ENCODE measurements at regions of chr2 and their contacts with region 1.

Region 1: GRCh38 chr2:7437716-7438632 is 520.8 kb downstream of the RNF144A start:
- DNase-seq: peak; percentile 77
- ATAC-seq: peak; percentile 44
- H3K4me3 Mint-ChIP-seq: peak overlapping the region; percentile 15
- H3K27ac Mint-ChIP-seq: peak overlapping the region; percentile 93
- H3K4me1 Mint-ChIP-seq: peaks cover 88% of the 10 kb centered on the region
- H3K27me3 Mint-ChIP-seq: no peaks in the 10 kb centered on the region
- CTCF ChIP-seq: no peak

Region 2: DNA sequence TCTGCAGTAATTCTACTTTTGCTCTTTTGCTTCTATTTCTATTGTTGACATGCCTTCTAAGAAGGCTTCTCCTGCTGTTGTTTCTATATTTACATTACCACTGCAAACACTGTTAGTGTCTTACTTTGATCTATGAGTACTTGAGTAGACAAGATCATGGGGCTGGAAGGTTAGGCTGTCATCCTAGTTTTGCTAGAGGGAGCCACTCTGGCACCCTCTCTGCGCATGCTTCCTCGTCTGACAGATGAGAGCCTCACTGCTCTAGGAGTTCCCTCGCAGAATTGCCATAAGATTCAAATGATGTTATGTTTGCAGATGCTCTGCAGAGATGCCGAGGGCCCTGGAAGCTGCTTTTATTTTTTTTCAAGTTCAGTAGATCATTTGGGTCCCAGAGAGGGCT is 335.1 kb before region 1 on chr2:
- CTCF ChIA-PET with region 1: no interaction called
- POLR2A ChIA-PET with region 1: no interaction called
- intact Hi-C with region 1: no loop called
- DNase-seq: no peak
- ATAC-seq: no peak
- H3K4me3 Mint-ChIP-seq: no peak overlapping the region
- H3K27ac Mint-ChIP-seq: no peak overlapping the region
- H3K4me1 Mint-ChIP-seq: no peaks in the 10 kb centered on the region
- H3K27me3 Mint-ChIP-seq: no peaks in the 10 kb centered on the region
- CTCF ChIP-seq: no peak

Region 3: DNA sequence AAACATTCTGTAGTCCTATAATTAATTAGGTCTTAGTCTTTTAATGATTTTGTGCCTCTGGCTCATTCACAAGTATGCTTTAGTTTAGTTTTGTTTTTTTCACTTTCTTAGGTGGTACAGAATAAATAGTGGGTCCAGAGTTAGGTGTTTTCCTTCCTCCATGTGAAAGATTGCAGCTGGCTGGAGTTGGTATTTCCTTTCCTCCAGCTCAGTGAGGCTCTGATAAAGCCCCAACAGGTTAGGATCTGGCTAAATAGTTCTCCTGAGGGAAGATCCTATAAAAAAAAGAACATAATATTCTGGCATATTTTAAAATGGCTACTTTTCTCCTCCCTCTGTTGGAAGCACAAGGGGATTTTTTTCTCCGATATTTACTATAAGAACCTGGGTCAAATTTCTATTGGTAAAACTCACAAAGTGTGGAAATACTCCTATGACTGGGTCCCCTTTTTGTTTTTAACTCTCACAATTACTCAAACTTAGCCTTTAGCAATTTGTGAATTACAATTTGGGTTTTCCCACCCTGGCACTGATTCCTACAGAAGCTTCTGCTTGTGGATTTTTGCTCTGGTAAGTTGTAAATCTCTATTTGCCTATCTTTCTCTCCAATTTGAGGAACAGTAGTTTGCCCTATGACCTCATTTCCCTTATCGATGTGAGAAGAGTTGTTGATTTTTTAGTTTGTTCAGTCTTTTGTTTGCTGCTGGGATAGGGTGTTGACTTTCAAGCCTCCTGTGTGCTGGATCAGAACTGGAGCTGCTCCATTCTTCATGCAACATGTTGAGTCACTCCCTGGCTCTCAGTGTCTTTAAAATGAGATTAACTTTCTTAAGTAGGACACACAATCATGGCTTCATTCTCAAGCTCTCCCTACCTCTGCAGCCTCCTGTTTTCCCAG is 19.9 kb before region 1 on chr2:
- CTCF ChIA-PET with region 1: no interaction called
- POLR2A ChIA-PET with region 1: no interaction called
- intact Hi-C with region 1: no loop called
- DNase-seq: no peak
- ATAC-seq: no peak
- H3K4me3 Mint-ChIP-seq: no peak overlapping the region
- H3K27ac Mint-ChIP-seq: no peak overlapping the region
- H3K4me1 Mint-ChIP-seq: no peaks in the 10 kb centered on the region
- H3K27me3 Mint-ChIP-seq: peaks cover 10% of the 10 kb centered on the region
- CTCF ChIP-seq: no peak

Region 4: DNA sequence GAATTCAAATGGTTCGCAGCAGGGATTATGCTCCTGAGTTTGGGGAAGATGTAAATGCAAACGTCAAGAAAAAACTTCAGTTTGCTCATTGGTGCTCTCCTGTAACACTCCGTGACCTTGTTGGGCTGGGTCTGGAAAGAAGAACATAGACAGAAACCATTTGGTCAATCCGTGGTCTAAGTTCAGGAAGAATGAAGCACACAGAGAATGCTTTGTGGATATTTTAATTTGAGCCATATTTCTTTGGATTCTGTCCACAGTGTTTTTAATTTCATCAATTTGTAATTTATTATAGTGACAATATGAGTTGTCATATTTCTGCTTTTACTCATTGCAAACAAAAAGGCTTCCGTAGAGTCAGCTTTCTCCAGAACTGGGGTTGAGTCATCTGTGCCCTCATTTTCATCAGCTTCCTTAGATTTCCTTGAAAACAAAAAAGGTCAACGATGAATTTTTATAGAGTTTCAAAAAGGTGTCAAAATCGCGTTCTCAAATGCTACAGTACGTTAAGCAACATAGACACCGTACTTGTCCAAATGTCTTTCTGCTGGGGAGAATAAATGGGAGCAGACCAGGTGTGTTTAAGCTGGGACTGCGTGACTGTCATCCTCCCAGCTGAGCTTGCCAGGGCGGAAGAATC is 85.6 kb after region 1 on chr2:
- CTCF ChIA-PET with region 1: no interaction called
- POLR2A ChIA-PET with region 1: interaction called, 28 read pairs
- intact Hi-C with region 1: loop called (anchors 10 kb)
- DNase-seq: peak; percentile 32
- ATAC-seq: peak; percentile 54
- H3K4me3 Mint-ChIP-seq: peak overlapping the region; percentile 48
- H3K27ac Mint-ChIP-seq: peak overlapping the region; percentile 87
- H3K4me1 Mint-ChIP-seq: peaks cover 72% of the 10 kb centered on the region
- H3K27me3 Mint-ChIP-seq: no peaks in the 10 kb centered on the region
- CTCF ChIP-seq: no peak

Measured in activated CD8-positive, alpha-beta T cell treated with anti-CD3 and anti-CD28 coated beads for 36 hours (primary cell).